ENCODE measurements at regions of chr11 and their contacts with region 1.

Region 1: GRCh38 chr11:100687630-100688395 is 725 bp downstream of the ARHGAP42 start:
- DNase-seq: peak; percentile 45
- H3K4me3 ChIP-seq: peak overlapping the region; percentile 79
- H3K27ac ChIP-seq: peak overlapping the region; percentile 68
- H3K27me3 ChIP-seq: no peaks in the 10 kb centered on the region
- CTCF ChIP-seq: peak; percentile 81

Region 2: GRCh38 chr11:100703801-100704575 is 16.2 kb after region 1 on chr11:
- CTCF ChIA-PET with region 1: interaction called, 21 read pairs
- POLR2A ChIA-PET with region 1: interaction called, 4 read pairs
- DNase-seq: no peak
- H3K4me3 ChIP-seq: no peak overlapping the region
- H3K27ac ChIP-seq: no peak overlapping the region
- H3K27me3 ChIP-seq: no peaks in the 10 kb centered on the region
- CTCF ChIP-seq: no peak

Region 3: GRCh38 chr11:100719809-100720221 is 32.0 kb after region 1 on chr11:
- CTCF ChIA-PET with region 1: interaction called, 14 read pairs
- POLR2A ChIA-PET with region 1: no interaction called
- DNase-seq: no peak
- H3K4me3 ChIP-seq: no peak overlapping the region
- H3K27ac ChIP-seq: peak overlapping the region; percentile 35
- H3K27me3 ChIP-seq: no peaks in the 10 kb centered on the region
- CTCF ChIP-seq: no peak

Region 4: DNA sequence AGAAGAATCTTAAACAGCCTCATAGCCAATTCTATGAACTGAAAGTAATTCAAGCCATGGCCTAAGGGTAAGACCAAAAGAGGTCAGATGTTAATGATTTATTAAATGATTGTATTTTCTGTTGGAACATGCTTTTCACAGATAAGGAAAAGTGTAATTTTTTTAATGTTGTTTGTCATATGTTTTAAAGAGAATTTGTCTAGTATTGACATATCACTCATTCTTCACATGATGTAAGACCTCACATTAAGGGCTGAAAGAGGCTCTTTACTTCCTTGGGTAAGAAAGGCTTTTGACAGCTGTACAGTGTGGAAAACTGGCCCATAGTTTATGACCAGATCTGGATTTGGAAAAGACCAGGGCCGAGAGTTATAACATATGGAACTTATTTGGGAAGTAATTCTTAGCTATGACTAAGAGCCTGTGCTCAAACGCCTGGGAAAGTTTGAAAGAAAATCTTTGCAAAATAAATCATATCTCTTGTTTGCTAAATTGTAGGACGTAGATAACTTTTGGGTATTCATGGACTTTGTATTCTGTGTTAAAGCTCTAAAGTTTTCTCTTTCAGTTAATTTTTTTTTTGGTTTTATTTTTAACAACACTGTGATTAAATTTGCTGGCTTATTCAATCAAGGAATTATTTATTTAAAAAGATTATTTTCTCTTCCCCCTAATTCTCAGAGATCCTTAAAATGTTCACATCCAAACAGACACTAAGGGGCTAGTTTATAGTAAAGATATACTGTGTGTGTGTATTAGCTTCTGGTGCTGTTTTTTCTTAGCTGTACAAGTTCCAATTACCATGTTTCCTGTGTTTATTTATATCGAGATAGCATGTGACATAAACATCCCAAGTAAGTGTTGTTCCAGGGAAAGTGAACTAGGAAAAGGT is 161.4 kb after region 1 on chr11:
- CTCF ChIA-PET with region 1: interaction called, 36 read pairs
- POLR2A ChIA-PET with region 1: no interaction called
- DNase-seq: peak; percentile 72
- H3K4me3 ChIP-seq: no peak overlapping the region
- H3K27ac ChIP-seq: no peak overlapping the region
- H3K27me3 ChIP-seq: no peaks in the 10 kb centered on the region
- CTCF ChIP-seq: no peak

Region 5: GRCh38 chr11:100855466-100856067 is 167.8 kb after region 1 on chr11:
- CTCF ChIA-PET with region 1: interaction called, 36 read pairs
- POLR2A ChIA-PET with region 1: no interaction called
- DNase-seq: no peak
- H3K4me3 ChIP-seq: no peak overlapping the region
- H3K27ac ChIP-seq: no peak overlapping the region
- H3K27me3 ChIP-seq: no peaks in the 10 kb centered on the region
- CTCF ChIP-seq: peak; percentile 64

Region 6: GRCh38 chr11:100930185-100930778 is 242.5 kb after region 1 on chr11:
- CTCF ChIA-PET with region 1: interaction called, 12 read pairs
- POLR2A ChIA-PET with region 1: no interaction called
- DNase-seq: no peak
- H3K4me3 ChIP-seq: no peak overlapping the region
- H3K27ac ChIP-seq: no peak overlapping the region
- H3K27me3 ChIP-seq: no peaks in the 10 kb centered on the region
- CTCF ChIP-seq: peak; percentile 59

Measured in AG04450 (cell line).